ENCODE measurements at regions of chr12 and their contacts with region 1.

Region 1: GRCh38 chr12:122500685-122501488 is at the start of gene ZCCHC8:
- DNase-seq: peak; percentile 97 to 98
- H3K4me3 ChIP-seq: peak within 1 kb of the TSS; percentile 63 to 76
- H3K27ac ChIP-seq: peak within 1 kb of the TSS; percentile 92 to 99
- H3K4me1 ChIP-seq: peaks cover 0 to 29% (median 18%) of the 10 kb centered on the region in 4 donors
- H3K27me3 ChIP-seq: no peaks in the 10 kb centered on the region
- CTCF ChIP-seq: peak; percentile 11 to 43

Region 2: GRCh38 chr12:122526683-122527477 is 26.0 kb after region 1 on chr12 and contains the starts of genes KNTC1 and RSRC2:
- intact Hi-C with region 1: loop called (anchors 2 kb)
- DNase-seq: peak; percentile 99
- H3K4me3 ChIP-seq: peak within 1 kb of the TSS; percentile 58 to 75
- H3K27ac ChIP-seq: peak within 1 kb of the TSS; percentile 91 to 98
- H3K4me1 ChIP-seq: peaks cover 0 to 43% (median 29%) of the 10 kb centered on the region in 4 donors
- H3K27me3 ChIP-seq: no peaks in the 10 kb centered on the region
- CTCF ChIP-seq: no peak

Region 3: DNA sequence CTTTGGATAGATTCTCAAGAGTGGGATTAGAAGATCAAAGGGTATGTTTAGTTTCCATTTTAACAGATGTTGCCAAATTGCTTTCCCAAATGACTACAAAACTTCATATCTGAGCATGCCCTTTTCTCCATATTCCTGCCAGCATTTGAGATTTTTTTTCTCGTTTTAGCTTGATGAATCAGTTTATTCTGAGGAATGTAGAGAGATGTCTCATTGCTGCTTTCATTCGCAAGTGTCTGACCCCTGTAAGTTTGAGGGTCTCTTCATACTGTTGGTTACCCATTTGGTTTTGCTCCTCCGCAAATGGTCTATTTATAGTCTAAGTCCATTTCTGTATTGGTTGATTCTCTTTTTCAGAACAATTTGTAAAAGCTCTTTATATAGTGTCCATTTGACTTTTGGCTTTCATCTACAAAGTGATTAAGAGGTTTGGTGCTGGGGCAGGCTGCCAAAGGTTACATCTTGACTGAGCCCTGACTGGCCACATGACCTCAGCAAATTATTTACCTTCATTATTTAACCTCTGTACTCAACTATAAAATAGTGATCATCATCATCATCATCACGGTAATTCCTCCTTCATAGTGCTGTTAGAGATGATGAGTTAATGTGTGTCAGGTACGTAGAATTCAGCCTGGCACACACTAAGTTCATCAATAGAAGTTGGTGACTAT is 168.6 kb after region 1 on chr12:
- intact Hi-C with region 1: no loop called
- DNase-seq: no peak
- H3K4me3 ChIP-seq: no peak overlapping the region
- H3K27ac ChIP-seq: no peak overlapping the region
- H3K4me1 ChIP-seq: no peaks in the 10 kb centered on the region
- H3K27me3 ChIP-seq: peaks cover 0 to 11% of the 10 kb centered on the region in 2 donors
- CTCF ChIP-seq: no peak

Measured in tibial artery (tissue), 4 donors.